ENCODE measurements at regions of chr5 and their contacts with region 1.

Region 1: DNA sequence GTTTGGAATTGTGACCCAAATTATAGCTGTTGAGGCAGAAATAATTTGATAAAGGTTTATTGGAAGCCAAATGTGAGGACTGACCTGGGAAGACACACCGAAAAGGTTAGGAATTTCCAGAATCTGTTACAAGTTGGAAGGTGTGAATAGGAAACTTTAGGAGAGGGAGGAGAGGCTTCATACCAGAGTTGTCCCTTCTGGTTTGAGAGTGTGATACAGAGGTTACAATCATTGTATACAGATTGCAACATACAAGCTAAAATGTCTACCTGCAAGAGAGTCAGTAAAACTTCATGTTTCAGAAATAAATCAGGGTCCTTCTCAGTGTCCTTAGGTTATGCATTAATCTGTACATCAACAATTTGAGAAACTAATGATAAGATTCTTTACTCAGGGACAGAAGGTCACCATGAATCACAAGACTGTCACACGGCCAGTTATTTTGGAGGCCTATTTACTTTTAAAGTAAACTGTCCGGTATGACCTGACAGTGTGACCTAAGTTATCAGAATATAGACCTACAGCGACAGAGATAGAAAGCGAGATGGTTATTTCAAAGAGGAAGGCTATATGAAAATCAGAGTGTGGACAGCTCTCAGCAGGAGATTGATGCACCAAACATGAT is 204.9 kb upstream of the CTNND2 start:
- DNase-seq: no peak
- H3K4me3 ChIP-seq: no peak overlapping the region
- H3K27ac ChIP-seq: no peak overlapping the region
- H3K4me1 ChIP-seq: no peaks in the 10 kb centered on the region
- H3K27me3 ChIP-seq: no peaks in the 10 kb centered on the region
- CTCF ChIP-seq: no peak

Region 2: DNA sequence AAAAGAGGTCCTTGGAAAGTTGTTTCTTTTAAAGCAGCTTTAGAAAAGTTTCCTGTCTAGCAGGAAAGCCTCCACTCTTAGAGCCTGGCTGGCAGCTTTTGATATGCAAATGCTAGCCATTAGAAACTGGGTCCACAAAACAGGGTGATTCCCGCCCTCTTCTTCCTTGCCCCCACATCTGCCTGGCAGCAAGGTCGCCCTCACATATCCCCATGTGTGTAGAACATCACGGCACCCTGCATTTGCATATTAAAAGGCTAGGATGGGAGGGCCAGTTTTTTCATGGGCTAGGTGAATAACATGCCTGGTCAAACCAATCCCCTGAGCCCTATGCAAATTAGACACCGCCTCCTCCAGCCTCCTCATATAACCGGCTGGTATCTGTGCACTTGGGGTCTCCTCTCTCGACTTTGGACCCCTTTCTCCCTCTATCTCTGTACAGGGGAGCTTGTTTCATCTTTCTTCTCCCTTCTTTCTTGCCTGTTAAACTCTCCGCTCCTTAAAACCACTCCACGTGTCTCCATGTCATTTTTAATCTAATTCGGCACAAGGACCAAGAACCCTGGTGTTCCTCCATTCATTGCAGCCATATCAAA is 221.9 kb after region 1 on chr5:
- CTCF ChIA-PET with region 1: no interaction called
- POLR2A ChIA-PET with region 1: no interaction called
- intact Hi-C with region 1: no loop called
- DNase-seq: no peak
- H3K4me3 ChIP-seq: no peak overlapping the region
- H3K27ac ChIP-seq: no peak overlapping the region
- H3K4me1 ChIP-seq: no peaks in the 10 kb centered on the region
- H3K27me3 ChIP-seq: no peaks in the 10 kb centered on the region
- CTCF ChIP-seq: no peak

Region 3: GRCh38 chr5:12951846-12952245 is 842.6 kb after region 1 on chr5:
- CTCF ChIA-PET with region 1: interaction called, 13 read pairs
- POLR2A ChIA-PET with region 1: no interaction called
- intact Hi-C with region 1: no loop called
- DNase-seq: no peak
- H3K4me3 ChIP-seq: no peak overlapping the region
- H3K27ac ChIP-seq: no peak overlapping the region
- H3K4me1 ChIP-seq: peaks cover 17% of the 10 kb centered on the region
- H3K27me3 ChIP-seq: no peaks in the 10 kb centered on the region
- CTCF ChIP-seq: no peak